H1 (cell line): ENCODE measurements at regions of chr3 and their contacts with region 1.

Region 1: GRCh38 chr3:35965908-35966307 is 326.6 kb downstream of the ARPP21 start:
- DNase-seq: no peak
- H3K4me3 ChIP-seq: no peak overlapping the region
- H3K27ac ChIP-seq: no peak overlapping the region
- H3K4me1 ChIP-seq: no peaks in the 10 kb centered on the region
- H3K27me3 ChIP-seq: no peaks in the 10 kb centered on the region
- CTCF ChIP-seq: peak in 2 of 3 experiments; percentile 41 to 69; a peak in 2 of 4 replicates
- EP300 ChIP-seq: no peak
- POLR2A ChIP-seq: no peak
- RAD21 ChIP-seq: peak; percentile 84

Region 2: DNA sequence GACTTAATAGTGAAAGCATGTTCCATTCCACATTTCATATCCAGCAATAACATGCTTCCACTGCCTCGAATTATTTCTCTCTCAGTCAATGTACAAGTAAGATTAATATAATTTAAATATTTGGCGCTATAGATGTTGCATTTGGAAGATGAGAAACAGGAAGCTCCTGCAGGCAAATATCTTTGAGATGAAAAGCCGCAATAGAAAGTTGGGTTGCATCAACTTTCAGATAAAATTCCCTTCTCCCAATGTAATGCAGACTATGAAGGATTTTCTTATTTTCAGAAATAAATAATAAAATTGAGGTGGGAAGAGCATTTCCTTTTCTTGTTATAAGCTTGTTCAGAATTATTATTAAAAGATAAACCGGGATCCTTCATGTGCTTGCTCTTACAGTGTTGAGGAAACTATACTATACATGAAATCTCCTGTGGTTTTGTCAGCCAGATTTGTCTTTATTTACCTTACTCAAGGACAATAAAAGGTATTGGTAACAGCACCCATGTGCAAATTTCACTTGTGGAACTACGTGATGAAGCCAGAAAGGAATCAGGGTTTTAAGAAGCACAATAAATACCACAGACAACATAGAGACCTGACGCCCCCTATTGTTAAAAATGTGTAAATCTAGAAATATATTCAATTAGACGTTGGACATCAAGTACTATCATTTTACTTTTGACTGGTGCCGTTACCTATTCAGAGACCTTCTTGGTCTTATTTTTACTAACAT is 19.6 kb before region 1 on chr3:
- CTCF ChIA-PET with region 1: interaction called, 13 read pairs
- POLR2A ChIA-PET with region 1: no interaction called
- DNase-seq: no peak
- H3K4me3 ChIP-seq: no peak overlapping the region
- H3K27ac ChIP-seq: no peak overlapping the region
- H3K4me1 ChIP-seq: no peaks in the 10 kb centered on the region
- H3K27me3 ChIP-seq: no peaks in the 10 kb centered on the region
- CTCF ChIP-seq: peak in 1 of 3 experiments; percentile 46; a peak in 2 of 4 replicates
- EP300 ChIP-seq: no peak
- POLR2A ChIP-seq: no peak
- RAD21 ChIP-seq: peak; percentile 53 to 54

Region 3: GRCh38 chr3:36114353-36114752 is 148.4 kb after region 1 on chr3:
- CTCF ChIA-PET with region 1: interaction called, 18 read pairs
- POLR2A ChIA-PET with region 1: no interaction called
- DNase-seq: no peak
- H3K4me3 ChIP-seq: no peak overlapping the region
- H3K27ac ChIP-seq: no peak overlapping the region
- H3K4me1 ChIP-seq: no peaks in the 10 kb centered on the region
- H3K27me3 ChIP-seq: no peaks in the 10 kb centered on the region
- CTCF ChIP-seq: no peak
- EP300 ChIP-seq: no peak
- POLR2A ChIP-seq: no peak
- RAD21 ChIP-seq: no peak

Region 4: DNA sequence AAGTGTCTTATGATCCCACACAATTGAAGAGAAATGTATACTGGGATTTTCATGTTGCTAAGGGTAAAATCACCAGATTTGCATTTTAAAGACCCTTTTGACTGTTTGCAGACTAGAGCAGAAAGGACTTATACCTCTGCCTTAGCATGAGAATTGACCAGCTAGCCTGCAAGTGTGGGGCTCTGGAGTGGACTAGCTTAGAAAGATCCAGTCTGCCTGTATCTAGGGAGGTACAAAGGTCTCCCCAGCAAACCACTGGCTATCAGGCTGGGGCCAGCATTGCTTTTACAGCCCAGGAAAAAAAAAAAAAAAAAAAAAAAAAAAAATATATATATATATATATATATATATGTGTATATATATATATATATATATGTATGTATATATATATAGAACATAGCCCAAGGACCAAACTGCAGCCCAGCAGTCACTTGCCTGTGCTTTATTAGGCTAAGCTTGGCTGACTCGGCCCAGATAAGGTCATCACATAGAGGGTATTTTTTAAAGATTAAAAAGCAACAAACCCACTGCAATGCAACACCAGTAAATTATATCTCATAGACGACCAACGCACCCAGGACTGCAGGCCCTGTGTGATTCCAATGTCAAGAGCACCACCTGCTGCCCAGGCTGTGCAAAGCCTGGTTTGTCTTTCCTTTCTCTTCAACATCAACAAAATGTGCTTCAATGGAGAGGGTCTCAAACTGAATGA is 734.8 kb after region 1 on chr3:
- CTCF ChIA-PET with region 1: interaction called, 22 read pairs
- POLR2A ChIA-PET with region 1: no interaction called
- DNase-seq: peak; percentile 31 to 73
- H3K4me3 ChIP-seq: no peak overlapping the region
- H3K27ac ChIP-seq: no peak overlapping the region
- H3K4me1 ChIP-seq: peaks cover 0 to 3% (median under 1%) of the 10 kb centered on the region in 4 experiments; a peak in 1 of 7 replicates
- H3K27me3 ChIP-seq: no peaks in the 10 kb centered on the region
- CTCF ChIP-seq: peak; percentile 78 to 90 (median 82)
- EP300 ChIP-seq: no peak
- POLR2A ChIP-seq: no peak
- RAD21 ChIP-seq: peak; percentile 97 to 98